Ovary (tissue), 10 donors: ENCODE measurements at regions of chr3 and their contacts with region 1.

Region 1: GRCh38 chr3:47836986-47837385 is 34.0 kb downstream of the DHX30 start:
- DNase-seq: no peak
- H3K4me3 ChIP-seq: no peak overlapping the region
- H3K27ac ChIP-seq: no peak overlapping the region
- H3K4me1 ChIP-seq: no peaks in the 10 kb centered on the region
- H3K27me3 ChIP-seq: no peaks in the 10 kb centered on the region
- CTCF ChIP-seq: no peak
- EP300 ChIP-seq: no peak
- POLR2A ChIP-seq: no peak

Region 2: DNA sequence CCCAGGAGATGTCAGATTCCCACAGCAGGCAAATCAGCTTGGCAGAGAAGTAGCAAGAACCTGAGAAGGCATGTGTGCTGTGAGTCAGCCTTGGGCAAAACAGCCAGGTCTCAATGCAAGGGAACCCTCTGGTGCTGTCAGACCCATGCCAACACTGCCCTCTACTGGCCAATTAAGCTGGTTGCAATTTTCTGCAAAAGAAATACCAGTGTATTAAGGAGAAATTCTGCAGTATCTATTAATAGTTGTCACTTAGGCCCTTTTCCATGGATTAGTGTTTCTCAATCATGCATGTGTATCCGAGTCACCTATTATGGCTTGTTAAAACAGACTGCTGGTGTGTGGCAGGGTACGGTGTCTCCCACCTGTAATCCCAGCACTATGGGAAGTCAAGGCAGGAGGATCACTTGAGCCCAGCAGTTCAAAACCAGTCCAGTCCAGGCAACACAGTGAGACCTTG is 153.0 kb after region 1 on chr3:
- intact Hi-C with region 1: loop called in 1 of 4 experiments (anchors 10 kb)
- DNase-seq: peak; percentile 69 to 86 (median 77)
- H3K4me3 ChIP-seq: no peak overlapping the region
- H3K27ac ChIP-seq: no peak overlapping the region
- H3K4me1 ChIP-seq: peaks cover 1% of the 10 kb centered on the region
- H3K27me3 ChIP-seq: no peaks in the 10 kb centered on the region
- CTCF ChIP-seq: peak; percentile 81 to 95 (median 90)
- EP300 ChIP-seq: no peak
- POLR2A ChIP-seq: no peak